IMR-90 (cell line): ENCODE measurements at regions of chr18 and their contacts with region 1.

Region 1: GRCh38 chr18:12442946-12443345 is 35.2 kb downstream of the PRELID3A start:
- DNase-seq: peak; percentile 75
- ATAC-seq: peak; percentile 37; the same call in 1 of the 2 replicates
- H3K4me3 ChIP-seq: no peak overlapping the region
- H3K27ac ChIP-seq: no peak overlapping the region
- H3K4me1 ChIP-seq: no peaks in the 10 kb centered on the region
- H3K27me3 ChIP-seq: no peaks in the 10 kb centered on the region
- CTCF ChIP-seq: no peak
- POLR2A ChIP-seq: no peak
- RAD21 ChIP-seq: no peak

Region 2: DNA sequence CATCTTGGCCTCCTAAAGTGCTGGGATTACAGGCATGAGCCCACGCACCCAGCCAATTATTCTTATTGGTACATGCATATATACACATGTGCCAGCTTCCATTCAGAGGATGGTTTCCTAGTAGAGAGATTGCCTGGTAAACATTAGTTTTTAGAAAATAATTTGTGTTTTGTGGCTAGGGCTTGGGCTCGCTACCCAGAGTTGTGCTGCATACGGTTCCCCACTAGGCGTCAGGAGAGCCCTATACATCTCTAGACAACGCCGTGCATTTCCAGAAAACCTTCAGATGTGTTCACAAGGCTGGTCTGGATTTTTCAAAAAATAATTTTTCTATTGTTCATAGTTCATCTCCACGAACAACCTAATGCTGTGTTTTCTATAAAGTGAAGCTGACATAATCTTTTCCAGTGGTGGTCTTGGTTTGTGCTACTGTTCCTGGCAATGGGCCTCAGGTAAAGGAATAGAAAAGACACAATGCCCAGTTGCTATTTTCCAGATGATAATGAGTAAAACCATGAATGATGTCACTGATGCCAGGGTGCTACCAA is 51.3 kb before region 1 on chr18:
- CTCF ChIA-PET with region 1: no interaction called
- POLR2A ChIA-PET with region 1: no interaction called
- dilution Hi-C with region 1: no loop called
- in situ Hi-C with region 1: no loop called
- intact Hi-C with region 1: no loop called
- DNase-seq: peak; percentile 75
- ATAC-seq: peak; percentile 99
- H3K4me3 ChIP-seq: no peak overlapping the region
- H3K27ac ChIP-seq: no peak overlapping the region
- H3K4me1 ChIP-seq: no peaks in the 10 kb centered on the region
- H3K27me3 ChIP-seq: 0 out of 2 replicates have a peak, but pooled peaks cover 3% of the 10 kb centered on the region
- CTCF ChIP-seq: peak; percentile 96
- POLR2A ChIP-seq: peak; percentile 51; the same call in 1 of the 2 replicates
- RAD21 ChIP-seq: peak; percentile 98

Region 3: DNA sequence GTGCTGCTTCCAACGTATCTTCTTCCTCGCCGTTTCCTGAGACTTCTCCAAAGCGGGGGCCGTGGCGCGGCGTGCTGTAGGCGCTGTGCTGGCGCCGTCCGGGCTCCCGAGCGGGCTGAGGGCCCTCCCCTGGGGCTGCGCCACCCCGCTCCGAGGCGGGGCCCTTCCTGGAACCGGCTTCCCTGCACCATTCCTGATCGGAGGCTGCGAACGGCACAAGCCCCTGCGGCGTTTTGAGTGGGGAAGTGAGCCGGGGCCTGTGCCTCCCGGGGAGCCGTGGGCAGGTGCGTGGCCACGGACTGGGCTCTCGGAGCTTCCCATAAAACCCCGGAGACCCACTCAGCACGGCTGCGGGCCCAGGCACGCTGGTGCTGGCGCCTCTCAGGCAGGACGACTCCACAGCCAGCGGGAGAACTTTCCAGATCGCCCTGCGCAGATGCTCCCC is 334.6 kb after region 1 on chr18:
- CTCF ChIA-PET with region 1: no interaction called
- POLR2A ChIA-PET with region 1: no interaction called
- dilution Hi-C with region 1: loop called (anchors 25 kb)
- in situ Hi-C with region 1: no loop called
- intact Hi-C with region 1: no loop called
- DNase-seq: no peak
- ATAC-seq: no peak
- H3K4me3 ChIP-seq: no peak overlapping the region
- H3K27ac ChIP-seq: no peak overlapping the region
- H3K4me1 ChIP-seq: no peaks in the 10 kb centered on the region
- H3K27me3 ChIP-seq: no peaks in the 10 kb centered on the region
- CTCF ChIP-seq: no peak
- POLR2A ChIP-seq: no peak
- RAD21 ChIP-seq: no peak